Heart right ventricle (tissue), 16 donors: ENCODE measurements at regions of chr6 and their contacts with region 1.

Region 1: GRCh38 chr6:125114248-125114858 is 39.2 kb upstream of the TPD52L1 start:
- DNase-seq: peak in 1 of 2 donors; percentile 53
- ATAC-seq: no peak
- H3K4me3 ChIP-seq: no peak overlapping the region
- H3K27ac ChIP-seq: no peak overlapping the region
- H3K4me1 ChIP-seq: no peaks in the 10 kb centered on the region
- H3K27me3 ChIP-seq: no peaks in the 10 kb centered on the region
- CTCF ChIP-seq: peak; percentile 77 to 97 (median 89)

Region 2: DNA sequence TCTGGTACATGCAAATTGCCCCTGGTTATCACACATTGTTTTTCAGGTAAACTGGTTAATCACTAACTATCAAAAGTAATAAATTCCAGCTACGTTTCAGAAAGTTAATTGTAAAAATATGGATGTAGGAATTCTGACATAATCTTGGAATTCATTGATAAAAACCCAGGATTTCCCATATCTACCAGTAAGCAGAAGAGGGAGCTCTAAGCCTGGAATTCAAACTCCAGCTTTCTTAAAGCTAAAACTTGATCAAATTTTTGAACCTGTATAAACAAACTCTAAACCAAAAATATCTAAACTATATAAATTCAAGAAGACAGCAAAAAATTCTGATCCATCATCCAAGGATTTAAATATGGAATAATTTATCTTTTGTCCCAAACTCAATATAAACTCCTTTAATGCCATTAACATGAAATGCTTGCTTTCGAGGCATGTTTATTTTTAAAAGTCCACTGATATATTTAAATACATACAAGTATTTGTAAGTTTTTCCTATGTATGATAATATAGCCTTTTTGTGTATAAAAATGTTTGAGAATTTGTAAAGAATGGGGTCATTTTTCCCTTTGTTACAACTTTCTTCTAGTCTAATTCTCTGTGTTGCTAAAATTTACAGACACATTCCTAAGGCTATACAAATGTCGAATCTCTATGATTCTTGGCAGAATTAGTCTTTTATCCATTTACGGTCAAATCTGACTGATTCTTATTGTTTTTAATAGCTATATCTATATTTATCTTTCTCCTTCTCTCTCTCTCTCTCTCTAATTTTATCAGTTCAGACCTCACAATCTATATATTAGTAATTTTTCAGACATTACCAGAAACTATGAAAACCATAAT is 243.5 kb before region 1 on chr6:
- intact Hi-C with region 1: loop called (anchors 1 to 5 kb)
- DNase-seq: no peak
- ATAC-seq: no peak
- H3K4me3 ChIP-seq: no peak overlapping the region
- H3K27ac ChIP-seq: no peak overlapping the region
- H3K4me1 ChIP-seq: no peaks in the 10 kb centered on the region
- H3K27me3 ChIP-seq: no peaks in the 10 kb centered on the region
- CTCF ChIP-seq: peak; percentile 44 to 87 (median 77)